Calu3 (cell line): ENCODE measurements at regions of chr5 and their contacts with region 1.

Region 1: DNA sequence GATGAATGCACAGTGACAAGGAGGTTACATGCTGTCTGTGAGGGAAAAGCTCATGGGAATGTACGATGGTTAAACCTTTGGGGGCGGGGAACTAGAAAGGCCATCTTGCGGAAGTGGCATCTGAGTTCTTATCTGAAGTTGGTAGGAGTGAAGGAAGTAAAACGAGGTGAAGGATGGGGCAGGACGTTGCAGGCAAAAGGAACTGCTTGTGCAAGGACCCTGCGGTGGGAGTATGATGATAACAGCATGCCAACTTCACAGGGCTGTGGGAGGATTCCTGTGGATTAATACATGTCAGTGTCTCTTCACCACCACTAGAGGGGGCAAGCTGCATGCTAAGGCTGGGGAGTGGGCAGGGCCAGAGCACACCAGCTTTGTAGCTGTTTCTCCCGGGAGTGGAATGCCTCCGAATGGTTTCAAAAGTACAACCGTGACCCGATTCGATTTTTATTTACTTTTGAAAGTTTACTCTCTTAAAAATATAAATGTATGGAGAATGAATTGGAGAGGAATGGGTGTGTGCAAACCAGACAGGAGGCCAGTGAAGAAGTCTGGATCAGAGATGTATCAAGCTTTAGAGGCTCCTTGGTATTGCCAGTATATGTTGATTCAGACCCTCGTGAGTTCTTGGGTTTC is 62.5 kb downstream of the CYFIP2 start:
- DNase-seq: peak; percentile 72
- H3K4me3 Mint-ChIP-seq: peak overlapping the region; percentile 19
- H3K27ac Mint-ChIP-seq: peak overlapping the region; percentile 29
- H3K4me1 Mint-ChIP-seq: peaks cover 30% of the 10 kb centered on the region
- H3K27me3 Mint-ChIP-seq: no peaks in the 10 kb centered on the region
- CTCF ChIP-seq: peak; percentile 89

Region 2: GRCh38 chr5:157390551-157391297 is 62.3 kb after region 1 on chr5:
- CTCF ChIA-PET with region 1: interaction called, 4 read pairs
- intact Hi-C with region 1: loop called (anchors 2 kb)
- DNase-seq: peak; percentile 92
- H3K4me3 Mint-ChIP-seq: no peak overlapping the region
- H3K27ac Mint-ChIP-seq: peak overlapping the region; percentile 97
- H3K4me1 Mint-ChIP-seq: peaks cover 46% of the 10 kb centered on the region
- H3K27me3 Mint-ChIP-seq: no peaks in the 10 kb centered on the region
- CTCF ChIP-seq: no peak

Region 3: GRCh38 chr5:157431544-157432200 is 103.3 kb after region 1 on chr5:
- CTCF ChIA-PET with region 1: no interaction called
- intact Hi-C with region 1: loop called (anchors 2 kb)
- DNase-seq: peak; percentile 52
- H3K4me3 Mint-ChIP-seq: no peak overlapping the region
- H3K27ac Mint-ChIP-seq: no peak overlapping the region
- H3K4me1 Mint-ChIP-seq: no peaks in the 10 kb centered on the region
- H3K27me3 Mint-ChIP-seq: peaks cover 3% of the 10 kb centered on the region
- CTCF ChIP-seq: peak; percentile 48

Region 4: DNA sequence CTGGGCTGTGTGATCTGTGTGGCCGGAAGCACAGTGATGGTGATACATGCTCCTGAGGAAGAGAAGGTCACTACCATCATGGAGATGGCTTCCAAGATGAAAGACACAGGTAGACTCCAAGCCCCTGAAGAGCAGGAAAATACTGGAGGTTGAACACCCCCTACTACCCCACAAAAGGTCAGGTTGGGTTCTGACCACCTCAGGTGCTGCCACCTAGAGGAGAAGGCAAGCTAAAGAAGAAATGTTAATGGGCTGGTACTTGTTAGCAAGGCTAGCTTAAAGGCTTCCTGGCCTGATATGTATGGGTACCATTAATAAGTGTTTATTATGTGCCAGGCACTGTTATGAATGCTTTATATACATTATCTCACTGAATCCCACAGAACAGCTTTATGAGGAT is 143.3 kb after region 1 on chr5:
- CTCF ChIA-PET with region 1: interaction called, 20 read pairs
- intact Hi-C with region 1: no loop called
- DNase-seq: peak; percentile 57
- H3K4me3 Mint-ChIP-seq: no peak overlapping the region
- H3K27ac Mint-ChIP-seq: no peak overlapping the region
- H3K4me1 Mint-ChIP-seq: no peaks in the 10 kb centered on the region
- H3K27me3 Mint-ChIP-seq: no peaks in the 10 kb centered on the region
- CTCF ChIP-seq: peak; percentile 81

Region 5: GRCh38 chr5:157718519-157718918 is 390.1 kb after region 1 on chr5:
- CTCF ChIA-PET with region 1: interaction called, 3 read pairs
- intact Hi-C with region 1: loop called (anchors 1 kb)
- DNase-seq: peak; percentile 27
- H3K4me3 Mint-ChIP-seq: no peak overlapping the region
- H3K27ac Mint-ChIP-seq: no peak overlapping the region
- H3K4me1 Mint-ChIP-seq: no peaks in the 10 kb centered on the region
- H3K27me3 Mint-ChIP-seq: no peaks in the 10 kb centered on the region
- CTCF ChIP-seq: no peak

Region 6: GRCh38 chr5:157743163-157744050 is 415.0 kb after region 1 on chr5 and contains the start of gene LSM11:
- CTCF ChIA-PET with region 1: interaction called, 13 read pairs
- intact Hi-C with region 1: loop called (anchors 2 kb)
- DNase-seq: peak; percentile 95
- H3K4me3 Mint-ChIP-seq: peak within 1 kb of the TSS; percentile 82
- H3K27ac Mint-ChIP-seq: peak within 1 kb of the TSS; percentile 88
- H3K4me1 Mint-ChIP-seq: peaks cover 22% of the 10 kb centered on the region
- H3K27me3 Mint-ChIP-seq: no peaks in the 10 kb centered on the region
- CTCF ChIP-seq: peak; percentile 100
- total RNA-seq, gene LSM11: 4.5 and 4.6 TPM in 2 replicates